OCI-LY7 (cell line): ENCODE measurements at regions of chr13 and their contacts with region 1.

Region 1: GRCh38 chr13:39347926-39348901 is 254.8 kb downstream of the LHFPL6 start:
- DNase-seq: no peak
- H3K4me3 ChIP-seq: no peak overlapping the region
- H3K27ac ChIP-seq: no peak overlapping the region
- H3K4me1 ChIP-seq: no peaks in the 10 kb centered on the region
- CTCF ChIP-seq: no peak

Region 2: DNA sequence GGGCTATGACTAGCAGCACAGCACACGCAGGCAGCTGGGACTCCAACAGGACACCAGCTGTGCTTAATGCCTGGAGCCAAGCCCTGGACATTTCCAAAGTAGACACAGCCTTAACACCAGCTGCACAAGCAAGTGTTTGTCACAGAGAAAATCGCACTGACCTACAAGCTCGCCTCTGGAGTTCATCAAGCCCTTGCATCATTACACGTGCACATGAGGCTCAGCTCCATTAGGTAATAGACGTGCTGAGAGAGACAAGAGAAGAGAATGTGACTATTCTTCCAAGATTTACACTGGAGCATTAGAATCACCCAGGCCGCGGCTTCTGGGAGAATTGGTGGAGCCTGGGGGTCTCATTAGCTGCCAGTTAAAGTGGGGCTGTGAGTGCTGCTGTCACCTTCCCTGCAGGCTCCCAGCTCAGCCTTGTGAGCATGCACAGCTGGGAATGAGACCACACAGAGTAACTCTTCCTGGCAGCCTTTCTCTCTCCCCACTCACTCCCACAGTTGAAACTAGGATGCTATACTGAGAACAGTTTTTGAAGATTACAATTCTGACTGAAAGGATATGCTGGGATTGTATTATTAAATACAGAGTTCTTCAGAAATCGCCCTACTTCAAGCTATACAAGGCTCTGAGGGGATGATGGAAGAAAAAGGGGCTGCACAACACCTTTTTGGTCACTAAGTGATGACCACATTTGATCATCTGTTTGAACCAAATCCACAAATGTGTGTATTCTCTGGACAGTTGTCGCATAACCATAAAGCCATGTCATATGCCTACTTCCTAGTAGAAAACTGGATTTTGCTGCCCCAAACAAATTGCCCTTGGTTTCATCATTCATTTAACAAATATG is 368.1 kb before region 1 on chr13:
- CTCF ChIA-PET with region 1: no interaction called
- POLR2A ChIA-PET with region 1: no interaction called
- intact Hi-C with region 1: loop called (anchors 10 kb)
- DNase-seq: no peak
- H3K4me3 ChIP-seq: no peak overlapping the region
- H3K27ac ChIP-seq: no peak overlapping the region
- H3K4me1 ChIP-seq: no peaks in the 10 kb centered on the region
- CTCF ChIP-seq: no peak

Region 3: DNA sequence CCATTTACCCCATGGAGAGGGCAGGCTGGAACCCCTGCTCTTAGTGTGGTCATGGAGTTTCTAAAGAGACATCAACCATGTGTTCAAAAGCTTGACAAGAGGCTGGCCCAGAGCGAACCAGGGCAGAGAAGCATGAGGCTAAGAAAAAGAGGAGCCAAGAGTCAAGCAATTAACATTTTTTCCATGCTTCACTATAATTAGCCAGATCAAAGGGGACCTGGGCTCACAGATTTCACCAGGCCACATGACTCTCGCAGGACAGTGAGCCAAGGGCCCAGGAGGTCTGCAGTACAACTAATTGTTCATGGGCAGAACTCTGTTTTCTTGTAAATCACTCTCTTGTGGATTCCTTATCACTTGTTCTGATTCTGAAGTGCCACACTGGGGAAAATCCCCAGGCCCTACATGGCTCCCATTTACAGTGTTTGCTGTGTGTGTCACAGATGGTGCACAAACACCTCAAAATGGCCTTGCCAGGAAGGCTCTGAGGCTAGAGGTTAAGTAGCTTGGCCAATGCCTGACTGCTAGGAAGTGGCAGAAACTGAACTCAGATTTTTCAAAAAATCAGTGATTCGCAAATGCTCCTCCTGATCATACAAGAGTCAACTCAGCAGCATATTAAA is 153.6 kb after region 1 on chr13:
- CTCF ChIA-PET with region 1: no interaction called
- POLR2A ChIA-PET with region 1: no interaction called
- intact Hi-C with region 1: no loop called
- DNase-seq: no peak
- H3K4me3 ChIP-seq: no peak overlapping the region
- H3K27ac ChIP-seq: no peak overlapping the region
- H3K4me1 ChIP-seq: peaks cover 12% of the 10 kb centered on the region
- CTCF ChIP-seq: no peak